ENCODE measurements at regions of chr7 and their contacts with region 1.

Region 1: GRCh38 chr7:43444711-43445578 is 138.0 kb upstream of the STK17A start:
- DNase-seq: no peak
- ATAC-seq: no peak
- H3K4me3 ChIP-seq: no peak overlapping the region
- H3K27ac ChIP-seq: no peak overlapping the region
- H3K4me1 ChIP-seq: no peaks in the 10 kb centered on the region
- CTCF ChIP-seq: no peak
- EP300 ChIP-seq: no peak
- POLR2A ChIP-seq: no peak
- RAD21 ChIP-seq: no peak

Region 2: GRCh38 chr7:43454936-43455518 is 10.1 kb after region 1 on chr7:
- CTCF ChIA-PET with region 1: interaction called, 27 read pairs
- POLR2A ChIA-PET with region 1: no interaction called
- DNase-seq: peak; percentile 22 to 38
- ATAC-seq: peak; percentile 56 to 63; a peak in 4 of 6 replicates
- H3K4me3 ChIP-seq: no peak overlapping the region
- H3K27ac ChIP-seq: no peak overlapping the region
- H3K4me1 ChIP-seq: no peaks in the 10 kb centered on the region
- CTCF ChIP-seq: peak; percentile 59
- EP300 ChIP-seq: no peak
- POLR2A ChIP-seq: no peak
- RAD21 ChIP-seq: peak; percentile 62 to 70

Measured in A549 (cell line).